Activated B cell treated with CpG ODN at 0.5 μM for 24 hours (primary cell): ENCODE measurements at regions of chr3 and their contacts with region 1.

Region 1: DNA sequence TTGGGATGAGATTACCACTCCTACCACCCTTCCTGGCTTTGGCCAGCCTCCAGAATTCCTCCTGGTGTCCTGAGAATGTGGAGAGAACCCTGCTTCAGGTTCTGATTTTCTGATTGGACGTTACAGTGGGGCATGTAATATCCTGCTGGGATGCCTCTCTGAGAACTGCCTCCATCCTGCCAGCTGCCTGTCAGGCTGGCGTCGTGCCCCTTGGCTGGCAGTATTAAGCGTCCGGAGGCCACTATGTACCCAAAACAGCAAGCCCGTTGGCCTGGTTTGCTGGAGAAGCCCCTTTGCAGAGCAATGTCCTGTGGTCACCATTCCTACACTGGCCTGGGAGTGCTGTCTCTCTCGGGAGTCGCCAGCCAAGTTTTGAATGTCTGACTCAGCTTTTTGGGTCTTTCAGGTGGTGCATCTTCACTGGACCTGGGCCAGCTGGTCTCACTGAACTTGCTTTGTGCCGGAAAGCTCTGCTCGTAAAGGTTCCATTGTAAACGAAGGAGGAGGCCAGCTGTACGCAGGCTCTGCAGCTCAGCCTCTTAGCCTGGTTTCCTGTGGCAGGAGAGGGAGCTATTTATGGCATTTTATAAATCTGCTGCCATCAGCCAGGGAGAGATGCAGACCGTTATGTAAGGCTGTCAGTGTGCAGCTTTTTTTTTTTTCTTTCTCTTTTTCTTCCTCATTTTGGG is 19.1 kb upstream of the TRAK1 start:
- DNase-seq: no peak
- ATAC-seq: no peak
- H3K4me3 Mint-ChIP-seq: peak overlapping the region; percentile 44
- H3K27ac Mint-ChIP-seq: peak overlapping the region; percentile 80
- H3K4me1 Mint-ChIP-seq: peaks cover 86% of the 10 kb centered on the region
- H3K27me3 Mint-ChIP-seq: no peaks in the 10 kb centered on the region
- CTCF ChIP-seq: no peak

Region 2: DNA sequence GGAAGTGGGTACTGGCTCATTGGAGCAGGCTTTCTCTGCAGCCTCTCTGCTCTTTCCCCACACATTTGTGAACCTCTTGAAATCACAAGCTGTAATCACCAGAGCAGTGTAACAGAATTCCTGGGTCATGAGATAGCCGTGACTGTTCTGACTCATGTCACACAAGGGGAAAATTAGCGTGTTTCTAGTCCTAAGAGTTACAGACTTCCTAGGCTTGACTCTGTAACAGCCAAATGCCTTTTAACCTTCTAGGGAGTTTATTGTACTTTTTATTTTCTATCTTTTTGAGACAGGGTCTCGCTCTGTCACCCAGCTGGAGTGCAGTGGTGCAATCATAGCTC is 35.6 kb before region 1 on chr3:
- CTCF ChIA-PET with region 1: no interaction called
- POLR2A ChIA-PET with region 1: interaction called, 11 read pairs
- intact Hi-C with region 1: no loop called
- DNase-seq: no peak
- ATAC-seq: peak; percentile 51
- H3K4me3 Mint-ChIP-seq: peak overlapping the region; percentile 55
- H3K27ac Mint-ChIP-seq: peak overlapping the region; percentile 86
- H3K4me1 Mint-ChIP-seq: peaks cover 90% of the 10 kb centered on the region
- H3K27me3 Mint-ChIP-seq: no peaks in the 10 kb centered on the region
- CTCF ChIP-seq: no peak

Region 3: GRCh38 chr3:42043027-42043796 is 28.8 kb before region 1 on chr3:
- CTCF ChIA-PET with region 1: no interaction called
- POLR2A ChIA-PET with region 1: interaction called, 20 read pairs
- intact Hi-C with region 1: loop called (anchors 1 kb)
- DNase-seq: no peak
- ATAC-seq: peak; percentile 22
- H3K4me3 Mint-ChIP-seq: no peak overlapping the region
- H3K27ac Mint-ChIP-seq: peak overlapping the region; percentile 68
- H3K4me1 Mint-ChIP-seq: peaks cover 84% of the 10 kb centered on the region
- H3K27me3 Mint-ChIP-seq: no peaks in the 10 kb centered on the region
- CTCF ChIP-seq: no peak

Region 4: GRCh38 chr3:42052484-42053351 is 19.3 kb before region 1 on chr3:
- CTCF ChIA-PET with region 1: no interaction called
- POLR2A ChIA-PET with region 1: interaction called, 47 read pairs
- intact Hi-C with region 1: loop called (anchors 1 kb)
- DNase-seq: no peak
- ATAC-seq: no peak
- H3K4me3 Mint-ChIP-seq: no peak overlapping the region
- H3K27ac Mint-ChIP-seq: peak overlapping the region; percentile 81
- H3K4me1 Mint-ChIP-seq: peaks cover 85% of the 10 kb centered on the region
- H3K27me3 Mint-ChIP-seq: no peaks in the 10 kb centered on the region
- CTCF ChIP-seq: no peak

Region 5: DNA sequence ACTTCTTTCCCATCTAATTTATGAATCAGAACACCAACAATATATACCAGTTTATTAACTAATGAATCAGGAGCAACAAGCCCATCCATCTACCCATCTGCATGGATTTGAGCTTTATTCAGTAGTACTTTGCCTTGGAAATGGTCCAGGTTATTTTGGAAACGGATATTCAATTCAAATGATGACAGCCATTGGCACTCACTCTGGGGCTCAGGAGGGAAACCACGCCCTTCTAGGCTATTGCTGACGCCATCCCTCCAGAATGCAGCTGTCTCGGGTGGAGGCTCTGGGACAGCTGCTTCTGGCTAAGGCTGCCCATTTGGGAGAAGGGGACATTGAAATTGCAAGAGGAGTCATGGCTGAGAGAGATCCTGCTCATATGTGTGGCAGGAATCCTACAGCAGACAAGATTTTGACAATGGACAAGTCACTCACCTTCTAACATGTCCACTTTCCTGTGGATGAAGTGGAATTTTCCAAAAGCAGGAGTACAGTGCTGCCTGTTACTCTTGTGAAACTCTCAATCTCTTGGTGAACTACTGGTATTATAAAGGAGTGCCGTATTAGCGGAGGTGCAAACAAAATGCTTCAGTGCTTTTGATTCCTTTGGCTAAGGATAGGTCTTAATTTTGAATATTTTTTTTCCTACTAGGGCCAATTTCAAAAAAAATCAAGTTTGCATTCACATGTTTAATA is 10.2 kb before region 1 on chr3:
- CTCF ChIA-PET with region 1: interaction called, 4 read pairs
- POLR2A ChIA-PET with region 1: interaction called, 13 read pairs
- intact Hi-C with region 1: loop called (anchors 1 kb)
- DNase-seq: no peak
- ATAC-seq: no peak
- H3K4me3 Mint-ChIP-seq: no peak overlapping the region
- H3K27ac Mint-ChIP-seq: peak overlapping the region; percentile 80
- H3K4me1 Mint-ChIP-seq: peaks cover 92% of the 10 kb centered on the region
- H3K27me3 Mint-ChIP-seq: no peaks in the 10 kb centered on the region
- CTCF ChIP-seq: no peak

Region 6: DNA sequence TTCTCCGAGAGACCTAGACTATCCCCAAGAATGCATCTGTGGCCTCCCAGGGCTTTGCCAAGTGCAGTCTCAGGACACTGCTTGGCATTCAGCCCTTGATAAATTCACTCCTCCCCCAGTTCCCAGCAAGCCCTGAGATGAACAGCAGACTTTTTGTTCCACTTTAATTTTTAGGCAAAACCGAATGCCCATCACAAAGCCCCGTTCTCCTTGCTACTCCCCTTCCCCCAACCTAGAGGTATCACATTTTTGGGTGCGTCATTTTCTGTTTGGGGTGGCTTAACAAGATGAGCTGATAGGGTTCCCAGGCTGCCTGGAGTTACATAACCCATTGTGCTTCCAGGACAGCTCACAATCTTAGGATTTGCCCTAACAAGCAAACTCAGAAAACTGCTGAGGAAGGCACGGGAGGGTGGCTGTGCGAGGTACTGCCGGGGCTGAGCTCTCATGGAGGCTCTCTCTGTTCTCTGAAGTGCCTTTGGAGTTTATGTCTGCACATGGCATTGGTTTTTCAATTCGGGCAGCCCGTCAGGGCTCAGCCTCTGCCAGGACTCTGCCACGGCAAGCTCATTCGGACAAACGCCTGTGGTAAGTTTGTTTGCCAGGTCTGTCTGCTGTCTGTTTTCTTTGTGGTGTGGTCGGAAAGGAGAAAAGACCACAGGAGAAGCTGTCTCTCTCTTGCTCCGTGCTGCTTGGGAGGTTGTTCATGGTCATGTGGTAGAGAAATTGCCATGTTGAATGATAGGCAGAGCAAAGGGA is 19.1 kb after region 1 on chr3 and contains the start of gene TRAK1:
- CTCF ChIA-PET with region 1: no interaction called
- POLR2A ChIA-PET with region 1: interaction called, 12 read pairs
- intact Hi-C with region 1: loop called (anchors 2 kb)
- DNase-seq: no peak
- ATAC-seq: no peak
- H3K4me3 Mint-ChIP-seq: peak within 1 kb of the TSS; percentile 29
- H3K27ac Mint-ChIP-seq: peak within 1 kb of the TSS; percentile 86
- H3K4me1 Mint-ChIP-seq: peaks cover 82% of the 10 kb centered on the region
- H3K27me3 Mint-ChIP-seq: no peaks in the 10 kb centered on the region
- CTCF ChIP-seq: no peak
- total RNA-seq, gene TRAK1: 54.5 and 58.4 TPM in 2 replicates

Region 7: GRCh38 chr3:42229942-42230688 is 158.1 kb after region 1 on chr3:
- CTCF ChIA-PET with region 1: no interaction called
- POLR2A ChIA-PET with region 1: no interaction called
- intact Hi-C with region 1: no loop called
- DNase-seq: no peak
- ATAC-seq: no peak
- H3K4me3 Mint-ChIP-seq: no peak overlapping the region
- H3K27ac Mint-ChIP-seq: no peak overlapping the region
- H3K4me1 Mint-ChIP-seq: no peaks in the 10 kb centered on the region
- H3K27me3 Mint-ChIP-seq: peaks cover 13% of the 10 kb centered on the region
- CTCF ChIP-seq: no peak